ENCODE measurements at regions of chr1 and their contacts with region 1.

Region 1: GRCh38 chr1:39799770-39800470 is 11.3 kb upstream of the BMP8B start:
- DNase-seq: peak; percentile 46 to 65 (median 60)
- H3K4me3 ChIP-seq: peak overlapping the region in 1 of 2 donors; percentile 26
- H3K4me3 Mint-ChIP-seq: peak overlapping the region; percentile 59 to 84 (median 78)
- H3K27ac ChIP-seq: peak overlapping the region; percentile 57
- H3K27ac Mint-ChIP-seq: peak overlapping the region; percentile 8 to 97 (median 95)
- H3K4me1 ChIP-seq: peaks cover 8% of the 10 kb centered on the region
- H3K4me1 Mint-ChIP-seq: peaks cover 5 to 14% (median 11%) of the 10 kb centered on the region in 4 donors
- H3K27me3 ChIP-seq: no peaks in the 10 kb centered on the region
- H3K27me3 Mint-ChIP-seq: no peaks in the 10 kb centered on the region

Region 2: DNA sequence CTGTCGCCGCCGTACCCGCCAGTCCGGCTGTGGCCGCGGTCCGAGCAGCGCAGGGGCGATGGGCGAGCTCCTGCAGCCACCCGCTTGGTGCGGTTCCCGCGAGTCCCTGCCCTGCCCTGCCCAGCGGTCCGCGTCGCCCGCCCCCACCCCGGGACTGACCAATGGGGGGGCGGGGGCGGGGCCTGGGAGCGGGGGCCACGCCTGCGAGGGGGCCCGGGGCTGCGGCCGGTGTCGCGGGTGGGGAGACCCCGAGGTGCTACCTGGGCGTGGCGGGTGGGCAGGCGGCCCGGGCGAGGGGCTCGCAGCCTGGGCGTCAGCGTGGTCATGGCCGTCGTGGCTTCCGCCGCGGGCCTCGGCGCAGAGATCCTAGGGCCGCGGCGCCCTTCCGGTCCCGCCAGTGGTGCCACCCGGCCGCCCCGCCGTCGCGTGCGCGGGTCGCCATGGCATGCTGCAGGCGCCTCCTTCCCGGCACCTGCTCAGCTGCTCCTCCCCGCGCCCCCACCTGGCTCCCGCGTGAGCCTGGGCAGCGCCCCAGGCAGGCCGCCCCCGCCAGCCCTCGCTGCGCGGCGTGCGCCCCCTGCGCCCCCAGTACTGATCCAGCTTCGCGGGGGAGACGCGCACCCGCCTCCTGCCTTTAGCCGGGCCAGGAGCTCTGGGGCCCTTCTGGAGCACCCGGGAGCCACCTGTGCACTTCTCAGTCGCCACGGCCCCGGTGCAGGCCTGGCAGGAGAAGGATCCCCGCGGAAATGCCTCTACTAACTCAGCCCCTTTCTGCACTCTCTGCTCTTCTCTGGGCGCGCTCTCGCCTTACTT is 11.0 kb before region 1 on chr1 and contains the start of gene BMP8B:
- CTCF ChIA-PET with region 1: interaction called, 11 read pairs
- POLR2A ChIA-PET with region 1: interaction called, 56 read pairs
- intact Hi-C with region 1: no loop called
- DNase-seq: peak; percentile 28 to 48 (median 42)
- H3K4me3 ChIP-seq: peak within 1 kb of the TSS in 1 of 2 donors; percentile 59
- H3K4me3 Mint-ChIP-seq: peak within 1 kb of the TSS; percentile 72 to 85 (median 80)
- H3K27ac ChIP-seq: no peak within 1 kb of the TSS
- H3K27ac Mint-ChIP-seq: peak within 1 kb of the TSS in 5 of 7 donors; percentile 27 to 90 (median 47)
- H3K4me1 ChIP-seq: peaks cover 7% of the 10 kb centered on the region
- H3K4me1 Mint-ChIP-seq: peaks cover 7 to 30% (median 15%) of the 10 kb centered on the region in 4 donors
- H3K27me3 ChIP-seq: no peaks in the 10 kb centered on the region
- H3K27me3 Mint-ChIP-seq: peaks cover 1 to 4% of the 10 kb centered on the region in 2 donors
- total RNA-seq, gene BMP8B: 0.89 to 0.99 TPM